CD4-positive, alpha-beta T cell (primary cell): ENCODE measurements at regions of chr12 and their contacts with region 1.

Region 1: DNA sequence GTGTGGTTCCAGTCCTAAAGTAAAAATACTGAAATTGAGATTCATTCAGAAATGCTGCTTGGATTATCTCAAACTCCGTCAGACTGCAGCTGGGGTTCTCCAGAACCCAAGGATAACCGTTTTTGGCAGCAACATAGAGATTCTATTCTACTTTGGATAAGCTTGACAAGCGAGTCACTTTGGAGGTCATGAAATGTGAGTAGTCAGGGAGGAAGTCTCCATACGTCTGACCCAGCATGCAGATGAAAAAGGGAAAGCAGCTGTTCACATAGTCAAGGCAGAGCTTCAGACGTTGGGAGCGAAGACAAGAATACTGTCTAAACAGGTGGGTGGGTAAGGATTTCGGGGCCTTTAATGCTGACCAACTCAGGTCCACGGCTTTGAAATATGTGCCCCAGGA is 14.9 kb upstream of the HSP90B1 start:
- DNase-seq: no peak
- ATAC-seq: no peak
- H3K4me3 ChIP-seq: no peak overlapping the region
- H3K4me3 Mint-ChIP-seq: no peak overlapping the region
- H3K27ac ChIP-seq: no peak overlapping the region
- H3K27ac Mint-ChIP-seq: no peak overlapping the region
- H3K4me1 ChIP-seq: no peaks in the 10 kb centered on the region
- H3K4me1 Mint-ChIP-seq: no peaks in the 10 kb centered on the region
- H3K27me3 ChIP-seq: no peaks in the 10 kb centered on the region
- H3K27me3 Mint-ChIP-seq: no peaks in the 10 kb centered on the region
- CTCF ChIP-seq: no peak

Region 2: DNA sequence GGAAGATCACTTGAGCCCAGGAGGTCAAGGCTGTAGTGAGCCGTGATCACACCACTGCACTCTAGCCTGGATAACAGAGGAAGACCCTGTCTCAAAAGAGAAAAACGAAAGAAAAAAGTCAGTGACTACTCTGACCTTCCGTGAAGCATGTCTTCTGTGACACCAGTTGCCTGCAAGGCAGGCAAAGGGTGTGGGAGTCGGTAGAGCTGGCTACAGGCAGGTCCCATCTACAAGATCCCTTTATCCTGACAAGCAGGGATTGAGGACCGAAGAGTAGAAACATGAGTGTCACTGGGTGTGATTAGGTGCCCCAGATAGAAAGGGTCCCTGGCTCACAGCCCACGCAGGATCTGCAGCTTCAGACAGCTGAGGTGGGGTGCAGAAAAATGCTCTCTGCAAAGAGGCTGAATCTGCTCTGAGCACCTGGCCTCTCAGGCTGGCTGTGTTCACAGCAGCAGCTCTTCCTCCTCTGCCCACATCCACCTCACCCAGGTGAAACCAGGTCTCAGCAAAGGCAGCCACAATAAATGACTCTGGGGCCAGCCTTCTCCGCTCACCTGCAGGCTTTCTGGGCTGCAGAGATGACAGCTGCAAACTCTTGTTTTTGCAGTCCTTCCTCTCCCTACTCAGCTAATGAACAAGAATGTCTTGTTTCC is 13.7 kb before region 1 on chr12:
- CTCF ChIA-PET with region 1: no interaction called
- POLR2A ChIA-PET with region 1: interaction called, 14 read pairs
- intact Hi-C with region 1: no loop called
- DNase-seq: peak; percentile 40 to 79 (median 57)
- ATAC-seq: peak; percentile 96
- H3K4me3 ChIP-seq: peak overlapping the region; percentile 43
- H3K4me3 Mint-ChIP-seq: peak overlapping the region; percentile 70
- H3K27ac ChIP-seq: peak overlapping the region; percentile 51 to 68
- H3K27ac Mint-ChIP-seq: peak overlapping the region; percentile 95
- H3K4me1 ChIP-seq: peaks cover 55% of the 10 kb centered on the region
- H3K4me1 Mint-ChIP-seq: peaks cover 76% of the 10 kb centered on the region
- H3K27me3 ChIP-seq: no peaks in the 10 kb centered on the region
- H3K27me3 Mint-ChIP-seq: no peaks in the 10 kb centered on the region
- CTCF ChIP-seq: no peak